Endothelial cell of umbilical vein (primary cell): ENCODE measurements at regions of chr9 and their contacts with region 1.

Region 1: GRCh38 chr9:109119439-109120203 is at the start of gene TMEM245:
- DNase-seq: peak; percentile 98
- H3K4me3 ChIP-seq: peak within 1 kb of the TSS; percentile 61 to 75 (median 74)
- H3K27ac ChIP-seq: peak within 1 kb of the TSS; percentile 42
- H3K4me1 ChIP-seq: peaks cover 16% of the 10 kb centered on the region
- H3K27me3 ChIP-seq: no peaks in the 10 kb centered on the region
- CTCF ChIP-seq: no peak
- POLR2A ChIP-seq: peak; percentile 75
- total RNA-seq, gene TMEM245: 39.4 and 44.2 TPM in 2 replicates

Region 2: DNA sequence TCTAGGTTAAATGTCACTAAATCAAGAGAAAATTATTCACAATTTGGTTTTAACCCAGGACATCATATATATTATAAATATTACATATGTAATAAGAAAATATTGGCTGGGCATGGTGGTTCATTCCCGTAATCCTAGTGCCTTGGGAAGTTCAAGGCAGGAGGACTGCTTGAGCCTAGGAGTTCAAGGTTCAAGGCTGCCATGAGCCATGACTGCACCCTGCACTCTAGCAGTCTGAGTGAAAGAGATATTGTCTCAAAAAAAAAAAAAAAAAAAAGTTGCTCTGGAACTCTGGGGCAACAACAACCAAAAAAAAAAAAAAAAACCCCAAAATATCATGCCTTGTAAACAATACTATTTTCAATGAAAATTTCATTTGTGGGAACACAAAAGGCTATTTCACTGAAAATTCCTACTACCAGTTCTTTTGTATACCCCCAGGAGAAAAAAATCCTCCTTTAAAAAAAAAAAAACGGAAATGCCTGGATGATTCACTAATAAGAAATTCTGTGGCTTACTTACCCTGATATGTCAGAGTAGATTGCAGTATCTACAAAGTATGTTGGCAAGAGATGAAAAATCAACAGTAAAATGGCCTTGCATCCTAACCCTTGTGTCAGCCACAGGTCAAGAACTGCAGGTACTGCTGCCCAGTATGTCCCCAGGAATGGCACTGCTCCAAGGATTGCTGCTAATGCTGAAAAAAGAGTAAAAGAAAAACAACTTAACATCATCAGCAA is 83.8 kb before region 1 on chr9:
- CTCF ChIA-PET with region 1: no interaction called
- POLR2A ChIA-PET with region 1: no interaction called
- dilution Hi-C with region 1: no loop called
- intact Hi-C with region 1: loop called (anchors 1 kb)
- DNase-seq: peak; percentile 94
- H3K4me3 ChIP-seq: no peak overlapping the region
- H3K27ac ChIP-seq: peak overlapping the region; percentile 84
- H3K4me1 ChIP-seq: peaks cover 42% of the 10 kb centered on the region
- H3K27me3 ChIP-seq: no peaks in the 10 kb centered on the region
- CTCF ChIP-seq: no peak
- POLR2A ChIP-seq: no peak

Region 3: GRCh38 chr9:109072128-109072692 is 47.4 kb before region 1 on chr9:
- CTCF ChIA-PET with region 1: no interaction called
- POLR2A ChIA-PET with region 1: no interaction called
- dilution Hi-C with region 1: no loop called
- intact Hi-C with region 1: no loop called
- DNase-seq: no peak
- H3K4me3 ChIP-seq: no peak overlapping the region
- H3K27ac ChIP-seq: no peak overlapping the region
- H3K4me1 ChIP-seq: no peaks in the 10 kb centered on the region
- H3K27me3 ChIP-seq: no peaks in the 10 kb centered on the region
- CTCF ChIP-seq: no peak
- POLR2A ChIP-seq: no peak

Region 4: GRCh38 chr9:109098171-109098959 is 21.3 kb before region 1 on chr9:
- CTCF ChIA-PET with region 1: interaction called, 10 read pairs
- POLR2A ChIA-PET with region 1: no interaction called
- dilution Hi-C with region 1: no loop called
- intact Hi-C with region 1: loop called (anchors 1 kb)
- DNase-seq: peak; percentile 97
- H3K4me3 ChIP-seq: peak overlapping the region in 1 of 3 experiments; percentile 21
- H3K27ac ChIP-seq: peak overlapping the region; percentile 52
- H3K4me1 ChIP-seq: peaks cover 54% of the 10 kb centered on the region
- H3K27me3 ChIP-seq: no peaks in the 10 kb centered on the region
- CTCF ChIP-seq: peak; percentile 19 to 33
- POLR2A ChIP-seq: no peak

Region 5: DNA sequence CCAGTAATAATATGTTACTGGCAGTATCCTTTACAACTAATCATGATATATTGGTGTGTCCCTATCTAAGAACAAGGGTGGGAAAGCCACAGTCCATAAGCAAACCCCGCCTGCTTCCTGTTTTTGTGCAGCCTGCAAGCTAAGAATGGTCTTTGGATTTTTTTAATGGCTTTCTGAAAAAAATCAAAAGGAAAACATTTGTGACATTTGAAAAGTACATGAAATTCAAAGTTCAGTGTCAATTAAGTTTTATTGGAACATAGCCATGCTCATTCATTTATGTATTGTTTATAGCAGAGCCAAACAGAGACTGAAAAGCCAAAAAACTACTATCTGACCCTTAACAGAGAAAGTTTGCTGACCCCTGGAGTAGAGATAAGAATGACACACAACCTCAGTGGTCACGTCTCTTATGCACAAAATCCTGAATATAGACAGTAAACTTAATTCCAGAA is 13.0 kb after region 1 on chr9:
- CTCF ChIA-PET with region 1: interaction called, 5 read pairs
- POLR2A ChIA-PET with region 1: interaction called, 3 read pairs
- dilution Hi-C with region 1: no loop called
- intact Hi-C with region 1: loop called (anchors 1 kb)
- DNase-seq: peak; percentile 83
- H3K4me3 ChIP-seq: no peak overlapping the region
- H3K27ac ChIP-seq: no peak overlapping the region
- H3K4me1 ChIP-seq: peaks cover 9% of the 10 kb centered on the region
- H3K27me3 ChIP-seq: no peaks in the 10 kb centered on the region
- CTCF ChIP-seq: no peak
- POLR2A ChIP-seq: no peak

Region 6: DNA sequence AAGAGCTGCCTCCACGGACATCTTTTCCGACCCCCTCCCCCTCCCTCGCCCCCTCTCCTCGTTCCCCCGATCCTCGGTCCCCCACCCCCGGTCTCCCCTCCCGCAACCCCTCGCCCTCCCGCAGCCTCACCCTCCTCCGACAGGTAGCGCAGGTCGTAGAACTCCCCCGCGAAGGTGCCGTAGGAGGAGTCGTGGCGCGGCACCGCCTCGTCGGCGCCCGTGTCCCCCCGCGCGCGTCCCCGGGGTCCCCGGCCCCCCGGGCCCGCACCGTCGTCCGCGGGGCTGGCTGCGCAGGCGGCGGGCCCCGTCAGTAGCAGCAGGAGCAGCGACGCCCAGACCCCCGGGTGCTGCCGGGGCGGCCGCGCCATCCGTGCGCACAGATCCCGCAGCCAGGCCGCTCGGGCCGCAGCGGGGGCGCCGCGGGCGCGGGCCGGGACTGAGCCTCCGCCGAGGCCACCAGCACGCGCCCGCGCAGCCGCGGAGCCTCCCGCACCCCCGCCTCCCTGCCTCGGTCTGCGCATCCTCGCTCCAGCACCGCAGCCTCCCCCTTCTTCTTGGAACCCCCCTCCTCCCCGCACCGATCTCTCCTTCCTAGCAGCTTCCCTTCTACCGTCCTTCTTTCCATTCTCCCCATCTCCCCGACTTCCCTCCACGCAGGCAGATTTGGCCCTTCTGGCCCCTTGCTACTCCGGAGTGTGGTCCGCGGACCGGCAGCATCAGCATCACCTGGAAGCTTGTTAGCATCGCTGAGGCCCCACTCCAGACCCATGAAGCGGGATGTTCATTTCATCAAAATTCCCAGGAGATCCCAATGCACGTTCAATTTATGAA is 47.4 kb after region 1 on chr9 and contains the start of gene FRRS1L:
- CTCF ChIA-PET with region 1: no interaction called
- POLR2A ChIA-PET with region 1: no interaction called
- dilution Hi-C with region 1: no loop called
- intact Hi-C with region 1: no loop called
- DNase-seq: no peak
- H3K4me3 ChIP-seq: no peak within 1 kb of the TSS
- H3K27ac ChIP-seq: no peak within 1 kb of the TSS
- H3K4me1 ChIP-seq: no peaks in the 10 kb centered on the region
- H3K27me3 ChIP-seq: peaks cover 32 to 33% of the 10 kb centered on the region in 2 experiments
- CTCF ChIP-seq: no peak
- POLR2A ChIP-seq: no peak
- total RNA-seq, gene FRRS1L: 0.05 TPM in 1 of 2 replicates, not detected in the other

Region 7: DNA sequence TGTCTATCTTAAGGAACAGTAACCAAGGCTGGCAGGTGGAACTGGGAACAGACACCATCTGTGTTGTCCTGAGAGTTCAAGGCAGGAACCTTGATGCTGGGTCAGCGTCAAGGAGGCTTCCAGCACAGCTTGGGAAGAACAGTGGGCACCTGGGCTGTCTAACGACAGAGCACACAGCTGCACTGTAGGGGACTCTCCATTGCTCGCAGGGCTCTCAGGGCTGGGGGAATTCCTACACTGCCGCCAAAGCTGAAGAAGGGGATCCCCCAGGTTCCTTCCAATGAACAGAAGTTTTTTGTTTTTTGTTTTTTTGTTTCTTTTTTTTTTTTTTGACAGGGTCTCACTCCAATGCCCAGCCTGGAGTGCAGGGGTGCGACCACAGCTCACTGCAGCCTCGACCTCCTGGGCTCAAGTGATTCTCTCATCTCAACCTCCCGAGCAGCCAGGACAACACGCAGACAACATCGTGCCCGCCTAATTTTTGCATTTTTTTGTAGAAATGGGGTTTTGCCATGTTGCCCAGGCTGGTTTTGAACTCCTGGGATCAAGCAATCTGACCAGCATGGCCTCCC is 296.6 kb after region 1 on chr9:
- CTCF ChIA-PET with region 1: no interaction called
- POLR2A ChIA-PET with region 1: no interaction called
- dilution Hi-C with region 1: no loop called
- intact Hi-C with region 1: no loop called
- DNase-seq: no peak
- H3K4me3 ChIP-seq: no peak overlapping the region
- H3K27ac ChIP-seq: no peak overlapping the region
- H3K4me1 ChIP-seq: no peaks in the 10 kb centered on the region
- H3K27me3 ChIP-seq: peaks cover 0 to 4% of the 10 kb centered on the region in 2 experiments
- CTCF ChIP-seq: no peak
- POLR2A ChIP-seq: no peak